Dorsolateral prefrontal cortex (tissue), 120 donors: ENCODE measurements at regions of chr4 and their contacts with region 1.

Region 1: DNA sequence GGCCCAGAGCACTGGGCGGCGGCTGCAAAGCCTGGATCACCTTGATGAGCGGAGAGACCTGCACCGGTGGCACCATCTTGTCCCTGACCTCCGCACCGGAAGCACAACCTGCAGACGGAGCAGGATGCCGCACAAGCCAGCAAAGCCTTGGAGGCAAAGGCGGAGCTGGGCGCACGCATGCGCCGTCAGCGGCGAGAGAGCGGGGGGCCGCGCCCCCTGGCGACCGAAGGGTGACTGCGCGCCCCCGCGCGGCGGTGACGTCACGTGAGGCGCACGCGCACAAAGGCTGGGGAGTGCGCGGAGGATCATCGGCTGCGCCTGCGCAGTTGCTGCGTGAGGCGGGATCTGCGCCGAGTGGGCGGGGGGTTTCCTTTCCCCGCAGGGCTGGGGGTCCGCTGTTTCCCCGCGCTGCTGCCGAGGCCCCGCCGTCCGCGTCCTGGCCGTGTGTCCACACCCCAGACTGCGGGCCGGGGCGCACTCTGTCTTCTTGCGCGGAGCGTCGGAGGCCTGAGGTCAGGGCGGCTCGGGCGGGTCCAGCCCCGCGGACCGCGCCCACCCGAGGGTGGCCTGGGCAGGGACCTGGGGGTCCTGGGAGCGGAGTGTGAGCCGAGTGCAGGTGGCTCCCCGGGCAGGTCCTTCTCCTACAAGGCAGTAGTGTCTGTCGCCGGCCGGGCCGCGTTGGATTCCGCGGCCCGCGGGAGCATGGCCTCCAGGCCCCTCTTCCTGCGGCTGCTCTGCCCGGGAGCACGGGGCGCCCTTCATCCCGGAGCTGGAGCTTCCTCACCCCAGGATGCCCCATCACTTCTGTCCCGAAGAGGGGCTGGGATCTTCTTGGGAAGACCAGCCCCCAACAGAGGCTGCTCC is at the starts of genes ATP5ME and MYL5:
- DNase-seq: peak; percentile 92 to 97 (median 96)
- H3K4me3 ChIP-seq: peak within 1 kb of the TSS; percentile 70 to 100 (median 94)
- H3K27ac ChIP-seq: peak within 1 kb of the TSS; percentile 76 to 100 (median 95)
- H3K27me3 ChIP-seq: no peaks in the 10 kb centered on the region
- CTCF ChIP-seq: peak; percentile 77 to 99 (median 93)
- total RNA-seq, gene ATP5ME: 167 to 373 (median 261) TPM
- total RNA-seq, gene MYL5: 5.0 to 32.6 (median 13.8) TPM

Region 2: DNA sequence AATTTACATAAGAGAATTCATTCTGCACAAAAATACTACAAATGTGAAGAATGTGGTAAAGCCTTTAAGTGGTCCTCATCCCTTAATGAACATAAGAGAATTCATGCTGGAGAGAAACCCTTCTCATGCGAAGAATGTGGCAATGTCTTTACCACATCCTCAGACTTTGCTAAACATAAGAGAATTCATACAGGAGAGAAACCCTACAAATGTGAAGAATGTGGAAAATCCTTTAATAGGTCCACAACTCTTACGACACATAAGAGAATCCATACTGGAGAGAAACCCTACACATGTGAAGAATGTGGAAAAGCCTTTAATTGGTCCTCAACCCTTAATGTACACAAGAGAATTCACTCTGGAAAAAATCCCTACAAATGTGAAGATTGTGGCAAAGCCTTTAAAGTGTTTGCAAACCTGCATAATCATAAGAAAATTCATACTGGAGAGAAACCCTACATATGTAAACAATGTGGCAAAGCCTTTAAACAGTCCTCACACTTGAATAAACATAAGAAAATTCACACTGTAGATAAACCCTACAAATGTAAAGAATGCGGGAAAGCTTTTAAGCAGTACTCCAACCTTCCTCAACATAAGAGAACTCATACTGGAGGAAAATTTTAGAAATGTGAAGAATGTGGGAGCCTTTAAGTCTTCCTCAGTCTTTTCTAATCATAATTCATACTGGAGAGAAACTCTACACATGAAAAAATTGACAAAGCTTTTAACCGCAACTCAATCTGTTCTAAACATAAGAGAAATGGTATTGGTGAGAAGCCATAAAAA is 512.7 kb before region 1 on chr4:
- intact Hi-C with region 1: no loop called
- DNase-seq: no peak
- H3K4me3 ChIP-seq: no peak overlapping the region
- H3K27ac ChIP-seq: no peak overlapping the region
- H3K27me3 ChIP-seq: no peaks in the 10 kb centered on the region
- CTCF ChIP-seq: no peak

Region 3: GRCh38 chr4:508675-509638 is 165.4 kb before region 1 on chr4:
- intact Hi-C with region 1: loop called in 1 of 2 experiments (anchors 10 kb)
- DNase-seq: no peak
- H3K4me3 ChIP-seq: no peak overlapping the region
- H3K27ac ChIP-seq: no peak overlapping the region
- H3K27me3 ChIP-seq: no peaks in the 10 kb centered on the region
- CTCF ChIP-seq: no peak

Region 4: GRCh38 chr4:602559-602942 is 71.9 kb before region 1 on chr4:
- intact Hi-C with region 1: loop called (anchors 5 to 10 kb)
- DNase-seq: peak in 8 of 10 donors; percentile 53 to 74 (median 62)
- H3K4me3 ChIP-seq: no peak overlapping the region
- H3K27ac ChIP-seq: no peak overlapping the region
- H3K27me3 ChIP-seq: no peaks in the 10 kb centered on the region
- CTCF ChIP-seq: peak in 55 of 56 donors; percentile 25 to 79 (median 63)